ENCODE measurements at regions of chr14 and their contacts with region 1.

Region 1: DNA sequence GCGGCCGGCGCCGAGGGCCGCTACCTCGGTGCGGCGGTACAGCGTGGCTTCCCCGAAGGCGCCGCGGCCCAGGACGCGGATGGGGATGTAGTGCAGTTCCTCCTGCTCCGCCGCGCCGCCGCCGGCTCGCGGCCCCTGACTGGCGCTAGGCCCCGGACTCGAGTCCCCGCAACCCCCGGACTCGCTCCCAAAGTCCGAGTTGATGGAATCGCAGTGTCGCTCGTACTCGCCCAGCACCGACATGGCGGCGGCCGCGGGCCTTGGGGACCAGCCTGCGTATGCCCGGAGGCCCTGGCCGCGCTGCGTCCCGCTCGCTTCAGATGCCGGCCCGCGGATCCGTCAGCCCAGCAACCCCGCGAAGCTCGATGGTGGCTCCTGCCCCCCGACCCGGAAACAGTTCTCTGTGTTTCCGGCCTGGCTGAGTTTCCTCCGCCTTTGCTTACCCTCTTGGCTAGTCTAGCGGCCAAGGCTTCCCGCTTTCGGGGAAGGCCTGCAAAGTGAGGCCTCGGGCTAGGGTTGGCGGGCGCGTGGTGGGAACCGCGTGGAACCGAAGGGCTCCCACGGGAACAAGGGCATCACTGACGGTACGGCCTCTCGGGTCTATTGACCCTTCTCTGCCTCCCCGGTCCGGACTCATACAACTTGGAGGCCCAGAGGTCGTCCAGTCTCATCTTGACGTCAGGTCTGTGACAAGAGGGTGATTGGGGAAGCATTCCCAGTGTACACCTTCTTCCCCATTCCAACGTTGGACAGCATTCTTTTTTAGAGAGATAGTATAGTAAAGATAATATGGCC is at the start of gene NEK9:
- DNase-seq: peak; percentile 92 to 95 (median 92)
- ATAC-seq: peak; percentile 92
- H3K4me3 ChIP-seq: peak within 1 kb of the TSS; percentile 60
- H3K4me1 ChIP-seq: peaks cover 28% of the 10 kb centered on the region
- CTCF ChIP-seq: no peak
- total RNA-seq, gene NEK9: 44.7 to 104 (median 49.9) TPM

Region 2: DNA sequence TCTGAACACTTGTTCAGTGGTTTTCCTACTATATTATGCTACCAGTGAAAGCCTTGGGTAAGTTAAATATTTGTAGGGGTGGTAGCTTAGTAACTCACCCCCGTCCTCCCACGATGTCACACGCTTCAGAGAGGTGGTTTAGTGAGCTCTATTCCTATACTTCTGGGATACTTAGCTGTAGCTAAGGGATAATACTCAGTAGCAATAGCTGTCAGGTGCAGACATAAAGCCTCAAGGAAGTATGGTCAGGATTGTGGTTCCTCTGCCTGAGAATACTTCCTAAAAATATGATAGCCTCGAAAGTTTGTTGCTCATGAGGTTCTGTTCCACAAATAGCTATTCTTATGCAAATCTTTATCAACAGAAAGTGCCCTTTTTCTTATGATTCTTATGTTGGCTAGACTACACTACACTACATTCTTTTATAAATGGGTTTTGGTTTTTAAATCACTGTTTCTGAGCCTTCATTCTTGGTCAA is 233.2 kb before region 1 on chr14:
- intact Hi-C with region 1: no loop called
- DNase-seq: no peak
- ATAC-seq: peak; percentile 31
- H3K4me3 ChIP-seq: no peak overlapping the region
- H3K4me1 ChIP-seq: no peaks in the 10 kb centered on the region
- CTCF ChIP-seq: no peak

Region 3: GRCh38 chr14:75295491-75296345 is 168.8 kb after region 1 on chr14:
- intact Hi-C with region 1: loop called in 1 of 2 experiments (anchors 5 kb)
- DNase-seq: peak; percentile 88 to 90 (median 89)
- ATAC-seq: peak; percentile 56
- H3K4me3 ChIP-seq: no peak overlapping the region
- H3K4me1 ChIP-seq: peaks cover 19% of the 10 kb centered on the region
- CTCF ChIP-seq: peak; percentile 93

Measured in mucosa of descending colon (tissue), 3 donors.